CD8-positive, alpha-beta T cell (primary cell): ENCODE measurements at regions of chr9 and their contacts with region 1.

Region 1: DNA sequence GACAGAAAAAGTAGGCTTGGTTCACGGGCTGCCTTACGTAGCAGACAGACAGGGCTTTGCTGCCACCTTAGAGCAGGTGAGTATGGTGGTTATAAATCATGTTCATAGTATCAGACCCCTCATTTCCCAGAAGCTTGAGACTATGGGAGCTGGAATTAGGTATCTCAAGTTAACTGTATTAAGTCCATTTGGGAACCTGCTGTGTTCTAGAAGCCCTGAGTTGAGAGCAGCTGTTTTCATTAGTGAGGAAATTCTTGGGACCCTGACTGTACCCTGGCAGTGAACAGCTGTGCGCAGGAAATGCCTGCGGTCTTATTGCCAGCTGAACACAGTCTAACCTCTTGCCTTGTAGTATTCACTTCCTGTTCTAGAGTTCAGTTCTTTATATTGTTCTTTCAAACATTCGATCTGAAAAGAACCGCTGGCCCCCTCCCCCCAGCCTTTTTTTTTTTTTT is 29.8 kb downstream of the UGCG start:
- DNase-seq: peak; percentile 8 to 83 (median 60)
- ATAC-seq: peak; percentile 94
- H3K4me3 ChIP-seq: peak overlapping the region in 1 of 2 experiments; percentile 36
- H3K4me3 Mint-ChIP-seq: peak overlapping the region; percentile 69
- H3K27ac ChIP-seq: peak overlapping the region; percentile 54 to 67
- H3K27ac Mint-ChIP-seq: peak overlapping the region; percentile 90
- H3K4me1 ChIP-seq: peaks cover 34% of the 10 kb centered on the region
- H3K4me1 Mint-ChIP-seq: peaks cover 43% of the 10 kb centered on the region
- H3K27me3 ChIP-seq: no peaks in the 10 kb centered on the region
- H3K27me3 Mint-ChIP-seq: no peaks in the 10 kb centered on the region
- CTCF ChIP-seq: no peak

Region 2: DNA sequence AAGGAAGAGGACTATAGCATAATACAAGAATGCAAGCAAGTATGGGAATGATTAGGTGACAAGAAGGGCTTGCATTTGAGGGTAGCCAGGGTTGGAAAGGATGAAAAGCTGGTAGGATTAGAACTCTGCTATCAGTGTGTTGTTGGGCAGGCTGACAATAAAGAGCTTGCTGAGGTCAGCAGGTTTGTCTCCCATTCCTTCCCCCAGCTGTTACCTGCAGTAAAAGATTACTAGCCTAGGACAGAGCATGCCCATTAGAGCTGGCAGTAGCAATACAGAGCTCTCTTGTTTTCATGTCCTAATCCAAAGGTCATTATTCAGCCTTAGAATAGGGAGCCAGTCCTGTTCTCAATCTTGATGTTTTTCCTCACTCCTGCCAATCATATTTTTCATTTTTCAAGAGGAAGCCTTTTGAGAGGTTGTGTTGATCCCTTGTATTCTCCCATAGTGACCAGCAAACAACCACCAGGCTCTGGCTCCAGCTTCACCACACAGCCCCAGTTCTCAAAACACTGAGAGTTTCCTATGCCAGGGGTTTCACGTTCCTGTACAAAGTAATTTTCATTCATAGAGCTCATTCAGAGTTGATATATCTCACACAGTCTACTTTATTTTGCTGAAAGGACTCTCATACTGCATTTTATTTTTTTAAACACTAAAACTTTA is 668.1 kb before region 1 on chr9:
- CTCF ChIA-PET with region 1: no interaction called
- POLR2A ChIA-PET with region 1: no interaction called
- intact Hi-C with region 1: no loop called
- DNase-seq: no peak
- ATAC-seq: no peak
- H3K4me3 ChIP-seq: no peak overlapping the region
- H3K4me3 Mint-ChIP-seq: no peak overlapping the region
- H3K27ac ChIP-seq: no peak overlapping the region
- H3K27ac Mint-ChIP-seq: no peak overlapping the region
- H3K4me1 ChIP-seq: no peaks in the 10 kb centered on the region
- H3K4me1 Mint-ChIP-seq: no peaks in the 10 kb centered on the region
- H3K27me3 ChIP-seq: no peaks in the 10 kb centered on the region
- H3K27me3 Mint-ChIP-seq: no peaks in the 10 kb centered on the region
- CTCF ChIP-seq: no peak

Region 3: GRCh38 chr9:111759762-111760639 is 166.4 kb before region 1 on chr9:
- CTCF ChIA-PET with region 1: interaction called, 7 read pairs
- POLR2A ChIA-PET with region 1: no interaction called
- intact Hi-C with region 1: loop called in 1 of 2 experiments (anchors 5 kb)
- DNase-seq: peak in 7 of 9 experiments; percentile 6 to 79 (median 41)
- ATAC-seq: peak; percentile 67
- H3K4me3 ChIP-seq: no peak overlapping the region
- H3K4me3 Mint-ChIP-seq: no peak overlapping the region
- H3K27ac ChIP-seq: no peak overlapping the region
- H3K27ac Mint-ChIP-seq: no peak overlapping the region
- H3K4me1 ChIP-seq: no peaks in the 10 kb centered on the region
- H3K4me1 Mint-ChIP-seq: peaks cover 4% of the 10 kb centered on the region
- H3K27me3 ChIP-seq: no peaks in the 10 kb centered on the region
- H3K27me3 Mint-ChIP-seq: no peaks in the 10 kb centered on the region
- CTCF ChIP-seq: peak; percentile 81

Region 4: GRCh38 chr9:111937781-111938426 is 11.5 kb after region 1 on chr9:
- CTCF ChIA-PET with region 1: interaction called, 3 read pairs
- POLR2A ChIA-PET with region 1: interaction called, 21 read pairs
- intact Hi-C with region 1: no loop called
- DNase-seq: peak; percentile 17 to 79 (median 55)
- ATAC-seq: peak; percentile 90
- H3K4me3 ChIP-seq: peak overlapping the region in 1 of 2 experiments; percentile 10
- H3K4me3 Mint-ChIP-seq: peak overlapping the region; percentile 73
- H3K27ac ChIP-seq: peak overlapping the region in 1 of 2 experiments; percentile 56
- H3K27ac Mint-ChIP-seq: peak overlapping the region; percentile 94
- H3K4me1 ChIP-seq: peaks cover 21% of the 10 kb centered on the region
- H3K4me1 Mint-ChIP-seq: peaks cover 22% of the 10 kb centered on the region
- H3K27me3 ChIP-seq: no peaks in the 10 kb centered on the region
- H3K27me3 Mint-ChIP-seq: no peaks in the 10 kb centered on the region
- CTCF ChIP-seq: no peak

Region 5: DNA sequence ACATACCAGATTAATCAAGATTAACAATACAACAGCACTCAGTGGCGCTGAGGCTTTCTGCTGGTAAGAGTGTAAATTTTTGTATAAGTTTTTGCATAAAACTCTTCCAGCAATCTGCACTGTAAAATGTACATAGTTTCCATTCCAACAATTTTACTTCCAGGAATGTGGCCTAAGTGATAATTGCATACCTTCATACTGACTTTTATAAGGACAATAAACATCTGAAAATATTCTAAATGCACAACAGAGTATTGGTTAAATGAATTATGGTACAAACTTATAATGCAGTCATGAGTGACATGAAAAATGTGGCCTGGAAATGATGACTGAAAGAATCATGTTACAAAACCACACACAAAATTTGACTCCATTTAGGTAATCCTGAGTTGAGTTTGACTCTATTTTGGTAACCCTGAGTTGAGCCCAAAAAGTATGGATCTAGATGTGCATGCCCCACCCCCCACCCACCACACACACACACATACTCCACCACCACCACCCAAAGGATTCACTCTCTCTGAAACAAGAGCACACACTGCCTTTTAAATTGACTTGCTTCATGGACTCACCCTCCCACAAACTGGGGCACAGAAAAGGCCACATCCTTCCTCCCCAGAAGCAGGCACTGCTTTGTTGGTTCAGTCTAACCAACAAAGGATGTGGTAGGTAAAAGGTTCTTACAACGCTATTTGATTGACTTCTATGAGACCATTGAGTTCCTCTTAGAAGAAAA is 111.0 kb after region 1 on chr9:
- CTCF ChIA-PET with region 1: no interaction called
- POLR2A ChIA-PET with region 1: interaction called, 3 read pairs
- intact Hi-C with region 1: loop called (anchors 1 to 10 kb)
- DNase-seq: peak; percentile 29 to 88 (median 70)
- ATAC-seq: peak; percentile 96
- H3K4me3 ChIP-seq: no peak overlapping the region
- H3K4me3 Mint-ChIP-seq: peak overlapping the region; percentile 68
- H3K27ac ChIP-seq: peak overlapping the region in 1 of 2 experiments; percentile 4
- H3K27ac Mint-ChIP-seq: peak overlapping the region; percentile 87
- H3K4me1 ChIP-seq: peaks cover 30% of the 10 kb centered on the region
- H3K4me1 Mint-ChIP-seq: peaks cover 59% of the 10 kb centered on the region
- H3K27me3 ChIP-seq: no peaks in the 10 kb centered on the region
- H3K27me3 Mint-ChIP-seq: peaks cover 17% of the 10 kb centered on the region
- CTCF ChIP-seq: no peak